ENCODE measurements at regions of chr6 and their contacts with region 1.

Region 1: GRCh38 chr6:104771258-104771832 is 88.4 kb downstream of the HACE1 start:
- DNase-seq: no peak
- ATAC-seq: peak; percentile 80
- H3K4me3 Mint-ChIP-seq: no peak overlapping the region
- H3K27ac Mint-ChIP-seq: no peak overlapping the region
- H3K4me1 Mint-ChIP-seq: peaks cover 7% of the 10 kb centered on the region
- H3K27me3 Mint-ChIP-seq: no peaks in the 10 kb centered on the region

Region 2: GRCh38 chr6:104525677-104526312 is 245.6 kb before region 1 on chr6:
- CTCF ChIA-PET with region 1: no interaction called
- POLR2A ChIA-PET with region 1: no interaction called
- intact Hi-C with region 1: loop called (anchors 5 to 10 kb)
- DNase-seq: peak; percentile 83
- ATAC-seq: peak; percentile 98
- H3K4me3 Mint-ChIP-seq: peak overlapping the region; percentile 55
- H3K27ac Mint-ChIP-seq: no peak overlapping the region
- H3K4me1 Mint-ChIP-seq: peaks cover 5% of the 10 kb centered on the region
- H3K27me3 Mint-ChIP-seq: peaks cover 21% of the 10 kb centered on the region

Region 3: GRCh38 chr6:104669483-104669882 is 101.9 kb before region 1 on chr6:
- CTCF ChIA-PET with region 1: no interaction called
- POLR2A ChIA-PET with region 1: no interaction called
- intact Hi-C with region 1: no loop called
- DNase-seq: no peak
- ATAC-seq: no peak
- H3K4me3 Mint-ChIP-seq: no peak overlapping the region
- H3K27ac Mint-ChIP-seq: no peak overlapping the region
- H3K4me1 Mint-ChIP-seq: no peaks in the 10 kb centered on the region
- H3K27me3 Mint-ChIP-seq: peaks cover 3% of the 10 kb centered on the region

Region 4: DNA sequence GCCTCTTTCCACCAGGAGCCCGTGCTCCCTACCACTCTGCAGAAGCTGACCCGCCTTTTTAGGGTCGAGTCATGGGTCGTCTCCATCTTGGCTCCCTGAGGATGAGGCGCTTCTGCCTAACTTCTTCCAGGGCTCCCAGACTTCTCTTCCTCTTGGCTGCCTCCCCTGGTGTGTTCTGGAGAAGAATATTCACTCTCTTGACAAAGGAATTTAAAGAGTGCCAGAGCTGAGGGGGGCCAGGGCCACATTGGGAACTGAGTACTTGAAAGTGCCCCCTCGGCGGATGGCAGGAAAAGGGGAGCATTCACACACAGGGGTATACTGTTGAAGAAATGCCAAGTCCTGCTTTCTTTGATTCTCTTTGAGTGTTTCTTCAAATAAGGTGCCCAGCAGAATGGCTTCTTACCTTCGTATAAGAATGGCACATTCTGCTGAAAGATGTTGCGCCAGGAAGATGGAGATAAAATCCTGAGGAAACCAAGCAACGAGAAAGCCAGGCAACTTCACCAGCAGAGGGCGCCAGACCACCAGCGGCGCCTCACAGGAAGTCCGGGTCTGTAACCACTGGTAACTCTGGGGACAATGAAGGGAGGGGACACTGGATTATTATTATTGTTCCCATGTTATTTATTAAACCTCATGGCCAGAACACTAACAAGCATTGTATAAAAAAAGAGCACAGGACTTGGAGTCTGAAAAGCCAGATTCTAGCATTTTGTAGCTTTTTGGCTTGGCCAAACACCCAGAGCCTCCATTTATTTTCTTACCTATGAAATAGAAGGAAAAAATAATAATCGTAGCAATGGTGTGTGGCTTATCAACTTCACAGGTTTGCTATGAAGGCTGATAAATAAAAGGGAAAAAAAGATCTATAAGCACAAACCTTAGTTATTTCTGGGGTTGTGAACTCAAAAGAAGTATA is 88.4 kb before region 1 on chr6:
- CTCF ChIA-PET with region 1: interaction called, 45 read pairs
- POLR2A ChIA-PET with region 1: no interaction called
- intact Hi-C with region 1: loop called (anchors 1 kb)
- DNase-seq: peak; percentile 86
- ATAC-seq: peak; percentile 73
- H3K4me3 Mint-ChIP-seq: no peak overlapping the region
- H3K27ac Mint-ChIP-seq: no peak overlapping the region
- H3K4me1 Mint-ChIP-seq: peaks cover 20% of the 10 kb centered on the region
- H3K27me3 Mint-ChIP-seq: no peaks in the 10 kb centered on the region